H1 (cell line): ENCODE measurements at regions of chr12 and their contacts with region 1.

Region 1: DNA sequence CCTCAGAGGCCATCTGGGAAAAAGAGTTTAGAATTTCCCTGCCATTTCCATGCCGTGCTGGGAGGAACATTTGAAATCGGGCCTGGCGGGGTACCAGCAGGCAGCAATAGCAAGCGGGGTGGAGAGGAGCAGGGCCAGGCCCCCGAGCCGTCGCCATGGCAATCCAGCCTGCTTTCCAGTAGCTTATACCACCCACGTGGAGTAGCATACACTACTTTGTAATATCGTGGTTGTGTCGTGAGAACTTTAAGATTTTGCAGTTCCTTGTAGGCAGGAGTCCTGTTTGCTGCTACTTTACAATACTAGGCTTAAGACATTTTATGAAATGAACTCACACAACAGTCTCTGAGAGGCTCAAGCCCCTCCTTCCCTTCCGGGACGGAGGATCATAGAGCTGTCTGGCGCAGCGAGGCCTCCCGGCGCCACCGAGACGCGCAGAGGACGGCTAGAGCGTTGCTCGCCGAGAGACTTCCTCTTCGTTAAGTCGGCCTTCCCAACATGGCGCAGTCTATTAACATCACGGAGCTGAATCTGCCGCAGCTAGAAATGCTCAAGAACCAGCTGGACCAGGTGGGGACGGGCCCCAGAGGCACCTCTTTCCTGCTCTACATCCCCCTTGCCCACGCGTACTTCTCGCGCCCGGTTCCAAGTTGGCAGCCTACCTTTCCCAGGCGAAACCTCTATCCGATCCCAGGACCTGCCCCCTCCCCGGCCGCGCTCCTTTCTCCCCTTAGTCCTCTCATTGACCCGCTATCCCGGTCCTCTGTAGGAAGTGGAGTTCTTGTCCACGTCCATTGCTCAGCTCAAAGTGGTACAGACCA is at the start of gene PFDN5:
- DNase-seq: peak; percentile 61 to 86
- H3K4me3 ChIP-seq: peak within 1 kb of the TSS; percentile 70 to 100 (median 100)
- H3K27ac ChIP-seq: peak within 1 kb of the TSS; percentile 70
- H3K4me1 ChIP-seq: peaks cover 0 to 4% (median 2%) of the 10 kb centered on the region in 4 experiments; a peak in 5 of 7 replicates
- H3K27me3 ChIP-seq: no peaks in the 10 kb centered on the region
- CTCF ChIP-seq: no peak
- EP300 ChIP-seq: no peak
- POLR2A ChIP-seq: peak; percentile 34 to 87
- RAD21 ChIP-seq: no peak
- total RNA-seq, gene PFDN5: 265 and 290 TPM in 2 replicates

Region 2: GRCh38 chr12:53169644-53170043 is 125.6 kb before region 1 on chr12:
- CTCF ChIA-PET with region 1: no interaction called
- POLR2A ChIA-PET with region 1: no interaction called
- DNase-seq: peak in 1 of 2 experiments; percentile 24
- H3K4me3 ChIP-seq: no peak overlapping the region
- H3K27ac ChIP-seq: no peak overlapping the region
- H3K4me1 ChIP-seq: peaks cover 0 to 3% (median 2%) of the 10 kb centered on the region in 4 experiments; a peak in 2 of 7 replicates
- H3K27me3 ChIP-seq: peaks cover 7 to 35% (median 32%) of the 10 kb centered on the region in 4 experiments
- CTCF ChIP-seq: no peak
- EP300 ChIP-seq: no peak
- POLR2A ChIP-seq: no peak
- RAD21 ChIP-seq: no peak

Region 3: GRCh38 chr12:53220801-53221202 is 74.5 kb before region 1 on chr12:
- CTCF ChIA-PET with region 1: interaction called, 573 read pairs
- POLR2A ChIA-PET with region 1: interaction called, 16 read pairs
- DNase-seq: peak in 1 of 2 experiments; percentile 92
- H3K4me3 ChIP-seq: peak overlapping the region; percentile 76 to 97 (median 86)
- H3K27ac ChIP-seq: no peak overlapping the region
- H3K4me1 ChIP-seq: peaks cover 39 to 69% (median 56%) of the 10 kb centered on the region in 4 experiments
- H3K27me3 ChIP-seq: peaks cover 0 to 3% (median 0%) of the 10 kb centered on the region in 4 experiments; a peak in 1 of 7 replicates
- CTCF ChIP-seq: no peak
- EP300 ChIP-seq: no peak
- POLR2A ChIP-seq: no peak
- RAD21 ChIP-seq: no peak

Region 4: DNA sequence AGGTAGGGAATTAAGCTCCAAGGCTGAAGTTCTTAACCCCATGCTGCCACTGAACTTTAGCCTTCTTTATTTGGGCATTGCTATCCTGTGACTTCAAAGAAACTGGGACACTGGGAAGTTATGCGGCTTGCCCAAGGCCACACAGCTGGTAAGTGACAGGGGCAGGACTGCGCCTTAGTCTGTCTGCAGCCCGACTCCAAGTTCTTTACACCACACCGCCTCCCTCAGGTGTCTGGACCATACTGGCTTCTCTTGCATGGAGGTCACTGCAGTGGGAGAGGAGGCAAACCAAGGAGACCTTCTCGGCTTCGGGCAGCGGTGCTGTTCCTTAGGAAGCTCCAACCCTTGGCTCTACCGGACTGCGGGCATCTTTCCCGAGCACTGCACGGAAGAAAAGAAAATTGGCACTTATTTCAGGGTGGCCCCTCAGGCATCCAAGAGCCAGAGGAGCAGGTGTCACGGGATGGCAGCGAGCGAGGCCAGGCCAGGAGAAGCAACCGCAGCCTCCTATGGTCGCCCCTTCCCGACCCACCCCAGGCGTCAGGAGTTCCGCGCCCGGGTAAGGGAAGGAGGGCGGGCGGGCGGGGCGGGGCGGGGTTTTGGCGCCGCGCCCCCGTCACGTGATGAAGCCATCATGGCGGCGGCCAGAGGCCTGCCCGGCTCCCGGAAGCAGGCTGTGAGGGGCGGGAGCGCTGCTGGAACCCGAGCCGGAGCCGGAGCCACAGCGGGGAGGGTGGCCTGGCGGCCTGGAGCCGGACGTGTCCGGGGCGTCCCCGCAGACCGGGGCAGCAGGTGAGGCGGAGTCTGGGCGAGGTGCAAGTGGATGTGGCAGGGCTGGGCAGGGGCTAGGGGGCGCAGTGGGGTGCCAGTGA is 43.6 kb before region 1 on chr12:
- CTCF ChIA-PET with region 1: interaction called, 6 read pairs
- POLR2A ChIA-PET with region 1: interaction called, 11 read pairs
- DNase-seq: peak in 1 of 2 experiments; percentile 86
- H3K4me3 ChIP-seq: peak overlapping the region; percentile 71 to 94 (median 80)
- H3K27ac ChIP-seq: peak overlapping the region; percentile 54; the same call in 1 of the 2 replicates
- H3K4me1 ChIP-seq: peaks cover 0 to 12% (median 3%) of the 10 kb centered on the region in 4 experiments; a peak in 5 of 7 replicates
- H3K27me3 ChIP-seq: no peaks in the 10 kb centered on the region
- CTCF ChIP-seq: peak; percentile 56 to 69 (median 65)
- EP300 ChIP-seq: no peak
- POLR2A ChIP-seq: peak in 1 of 2 experiments; percentile 54; a peak in 1 of 3 replicates
- RAD21 ChIP-seq: peak; percentile 78 to 84

Region 5: GRCh38 chr12:53279283-53279869 is 15.9 kb before region 1 on chr12:
- CTCF ChIA-PET with region 1: interaction called, 6 read pairs
- POLR2A ChIA-PET with region 1: interaction called, 76 read pairs
- DNase-seq: no peak
- H3K4me3 ChIP-seq: no peak overlapping the region
- H3K27ac ChIP-seq: no peak overlapping the region
- H3K4me1 ChIP-seq: no peaks in the 10 kb centered on the region
- H3K27me3 ChIP-seq: no peaks in the 10 kb centered on the region
- CTCF ChIP-seq: no peak
- EP300 ChIP-seq: no peak
- POLR2A ChIP-seq: no peak
- RAD21 ChIP-seq: no peak

Region 6: DNA sequence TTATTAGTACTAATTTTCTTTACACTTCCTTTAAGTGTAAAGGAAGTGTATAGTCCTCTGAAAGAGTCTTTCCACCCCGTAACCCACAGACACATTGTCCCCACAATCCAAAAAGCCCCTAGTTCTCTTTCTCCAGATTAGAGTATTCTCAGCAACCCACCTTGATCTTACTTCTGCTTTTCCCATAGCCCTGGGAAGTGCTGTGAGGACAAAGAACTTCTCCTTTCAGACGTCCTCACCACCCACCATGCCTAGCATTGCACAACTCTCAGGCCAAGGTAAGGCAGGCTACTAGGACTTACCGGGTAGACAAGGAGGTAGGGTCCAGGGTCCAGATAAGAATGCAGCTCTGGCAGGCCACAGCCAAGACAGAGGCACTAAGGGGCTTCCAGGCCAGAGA is 18.7 kb after region 1 on chr12:
- CTCF ChIA-PET with region 1: interaction called, 23 read pairs
- POLR2A ChIA-PET with region 1: interaction called, 30 read pairs
- DNase-seq: no peak
- H3K4me3 ChIP-seq: no peak overlapping the region
- H3K27ac ChIP-seq: no peak overlapping the region
- H3K4me1 ChIP-seq: no peaks in the 10 kb centered on the region
- H3K27me3 ChIP-seq: no peaks in the 10 kb centered on the region
- CTCF ChIP-seq: no peak
- EP300 ChIP-seq: no peak
- POLR2A ChIP-seq: no peak
- RAD21 ChIP-seq: no peak

Region 7: DNA sequence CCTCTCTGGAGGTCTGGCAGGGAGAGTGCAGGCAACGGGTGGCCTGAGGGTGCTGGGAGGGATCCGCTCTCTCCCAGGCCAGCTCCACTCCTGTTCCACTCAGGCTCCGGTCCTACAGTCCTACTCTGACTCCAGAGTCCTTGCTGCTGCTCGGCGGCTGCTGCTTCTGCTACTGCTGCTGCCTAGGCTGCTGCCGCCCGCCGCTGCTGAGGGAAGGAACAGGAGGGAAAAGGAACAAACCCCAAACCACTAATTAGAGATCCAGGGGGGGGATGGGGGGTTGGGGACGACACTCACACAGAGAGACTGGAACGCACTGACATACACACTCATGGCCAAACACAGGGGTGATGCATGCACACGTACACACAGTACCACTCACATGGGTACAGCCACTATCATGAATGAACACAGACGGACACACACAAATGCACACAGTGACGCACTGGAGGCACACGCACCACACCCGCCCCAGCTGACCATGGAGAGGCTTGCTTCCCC is 41.0 kb after region 1 on chr12 and contains the start of gene SP7:
- CTCF ChIA-PET with region 1: no interaction called
- POLR2A ChIA-PET with region 1: no interaction called
- DNase-seq: no peak
- H3K4me3 ChIP-seq: no peak within 1 kb of the TSS
- H3K27ac ChIP-seq: no peak within 1 kb of the TSS
- H3K4me1 ChIP-seq: peaks cover 0 to 22% (median 1%) of the 10 kb centered on the region in 4 experiments; a peak in 4 of 7 replicates
- H3K27me3 ChIP-seq: peaks cover 0 to 12% (median 5%) of the 10 kb centered on the region in 4 experiments; a peak in 3 of 7 replicates
- CTCF ChIP-seq: no peak
- EP300 ChIP-seq: no peak
- POLR2A ChIP-seq: no peak
- RAD21 ChIP-seq: no peak
- total RNA-seq, gene SP7: 0.13 TPM in 1 of 2 replicates, not detected in the other

Region 8: GRCh38 chr12:53746592-53747092 is 451.4 kb after region 1 on chr12:
- CTCF ChIA-PET with region 1: no interaction called
- POLR2A ChIA-PET with region 1: no interaction called
- DNase-seq: peak; percentile 77 to 96
- H3K4me3 ChIP-seq: no peak overlapping the region
- H3K27ac ChIP-seq: no peak overlapping the region
- H3K4me1 ChIP-seq: peaks cover 0 to 24% (median 6%) of the 10 kb centered on the region in 4 experiments; a peak in 5 of 7 replicates
- H3K27me3 ChIP-seq: peaks cover 43 to 77% (median 57%) of the 10 kb centered on the region in 4 experiments
- CTCF ChIP-seq: peak; percentile 99 to 100 (median 100)
- EP300 ChIP-seq: peak in 1 of 2 experiments; percentile 50; a peak in 1 of 3 replicates
- POLR2A ChIP-seq: no peak
- RAD21 ChIP-seq: peak; percentile 89 to 96